B cell (primary cell): ENCODE measurements at regions of chr13 and their contacts with region 1.

Region 1: GRCh38 chr13:21670883-21671619 is at the start of gene FGF9:
- DNase-seq: peak; percentile 89
- ATAC-seq: peak; percentile 73
- H3K4me3 ChIP-seq: peak within 1 kb of the TSS; percentile 63 to 89 (median 75)
- H3K4me3 Mint-ChIP-seq: peak within 1 kb of the TSS; percentile 92
- H3K27ac ChIP-seq: no peak within 1 kb of the TSS
- H3K27ac Mint-ChIP-seq: peak within 1 kb of the TSS; percentile 79
- H3K4me1 ChIP-seq: peaks cover 48 to 60% of the 10 kb centered on the region in 2 donors
- H3K4me1 Mint-ChIP-seq: peaks cover 50% of the 10 kb centered on the region
- H3K27me3 ChIP-seq: peaks cover 0 to 66% (median 42%) of the 10 kb centered on the region in 4 experiments
- H3K27me3 Mint-ChIP-seq: peaks cover 49% of the 10 kb centered on the region
- CTCF ChIP-seq: no peak
- total RNA-seq, gene FGF9: 2.5 and 3.0 TPM in 2 replicates

Region 2: DNA sequence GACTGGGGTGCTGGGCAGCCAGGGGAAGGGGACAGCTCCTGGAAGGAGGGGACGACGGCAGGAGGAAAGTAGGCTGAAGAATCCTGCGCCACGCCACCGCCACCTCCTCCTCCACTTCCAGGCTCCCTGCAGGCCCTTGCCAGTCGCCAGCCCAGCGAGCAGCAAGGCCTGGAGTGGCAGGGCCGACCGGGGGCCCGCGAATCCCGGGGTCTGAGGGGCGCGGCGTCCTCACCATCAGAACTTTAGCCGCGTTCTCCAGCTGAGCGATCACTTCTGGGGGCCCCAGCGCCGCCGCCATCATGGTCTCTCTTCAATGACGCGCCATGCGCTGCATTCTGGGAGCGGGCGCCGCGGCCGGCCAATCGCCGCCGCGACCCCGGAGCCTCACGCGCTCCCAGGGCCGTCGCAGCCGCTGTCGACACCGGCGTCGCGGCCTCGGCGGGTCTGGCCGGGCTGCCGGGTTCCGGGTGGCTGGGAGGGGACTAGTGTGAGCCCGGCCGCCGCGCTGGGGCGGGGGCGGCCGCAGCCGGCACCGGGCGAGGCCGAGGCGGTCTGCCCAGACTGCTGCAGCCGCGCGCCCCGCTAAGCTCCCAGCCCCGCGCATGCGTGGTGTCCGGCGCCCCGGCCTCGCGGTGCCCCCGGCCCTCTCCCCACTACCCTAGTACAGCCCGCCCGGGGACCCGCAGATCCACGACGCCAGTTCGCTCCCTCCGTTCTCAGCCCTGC is 768.5 kb before region 1 on chr13 and contains the start of gene XPO4:
- CTCF ChIA-PET with region 1: no interaction called
- POLR2A ChIA-PET with region 1: no interaction called
- intact Hi-C with region 1: loop called (anchors 5 kb)
- DNase-seq: peak; percentile 89
- ATAC-seq: peak; percentile 91
- H3K4me3 ChIP-seq: peak within 1 kb of the TSS; percentile 62 to 98 (median 96)
- H3K4me3 Mint-ChIP-seq: peak within 1 kb of the TSS; percentile 94
- H3K27ac ChIP-seq: peak within 1 kb of the TSS; percentile 91 to 97
- H3K27ac Mint-ChIP-seq: peak within 1 kb of the TSS; percentile 94
- H3K4me1 ChIP-seq: peaks cover 10 to 11% of the 10 kb centered on the region in 2 donors
- H3K4me1 Mint-ChIP-seq: peaks cover 30% of the 10 kb centered on the region
- H3K27me3 ChIP-seq: no peaks in the 10 kb centered on the region
- H3K27me3 Mint-ChIP-seq: no peaks in the 10 kb centered on the region
- CTCF ChIP-seq: no peak
- total RNA-seq, gene XPO4: 25.9 and 30.6 TPM in 2 replicates

Region 3: GRCh38 chr13:21297914-21298831 is 372.9 kb before region 1 on chr13:
- CTCF ChIA-PET with region 1: no interaction called
- POLR2A ChIA-PET with region 1: no interaction called
- intact Hi-C with region 1: loop called (anchors 2 kb)
- DNase-seq: peak; percentile 93
- ATAC-seq: peak; percentile 96
- H3K4me3 ChIP-seq: peak overlapping the region; percentile 8 to 88 (median 75)
- H3K4me3 Mint-ChIP-seq: peak overlapping the region; percentile 89
- H3K27ac ChIP-seq: peak overlapping the region; percentile 7 to 77
- H3K27ac Mint-ChIP-seq: peak overlapping the region; percentile 89
- H3K4me1 ChIP-seq: peaks cover 15 to 18% of the 10 kb centered on the region in 2 donors
- H3K4me1 Mint-ChIP-seq: peaks cover 17% of the 10 kb centered on the region
- H3K27me3 ChIP-seq: no peaks in the 10 kb centered on the region
- H3K27me3 Mint-ChIP-seq: no peaks in the 10 kb centered on the region
- CTCF ChIP-seq: peak; percentile 93

Region 4: GRCh38 chr13:21465710-21466160 is 205.3 kb before region 1 on chr13:
- CTCF ChIA-PET with region 1: no interaction called
- POLR2A ChIA-PET with region 1: no interaction called
- intact Hi-C with region 1: no loop called
- DNase-seq: no peak
- ATAC-seq: no peak
- H3K4me3 ChIP-seq: no peak overlapping the region
- H3K4me3 Mint-ChIP-seq: no peak overlapping the region
- H3K27ac ChIP-seq: no peak overlapping the region
- H3K27ac Mint-ChIP-seq: no peak overlapping the region
- H3K4me1 ChIP-seq: no peaks in the 10 kb centered on the region
- H3K4me1 Mint-ChIP-seq: no peaks in the 10 kb centered on the region
- H3K27me3 ChIP-seq: no peaks in the 10 kb centered on the region
- H3K27me3 Mint-ChIP-seq: peaks cover 6% of the 10 kb centered on the region
- CTCF ChIP-seq: no peak

Region 5: GRCh38 chr13:21483748-21484147 is 187.3 kb before region 1 on chr13:
- CTCF ChIA-PET with region 1: no interaction called
- POLR2A ChIA-PET with region 1: no interaction called
- intact Hi-C with region 1: no loop called
- DNase-seq: no peak
- ATAC-seq: no peak
- H3K4me3 ChIP-seq: no peak overlapping the region
- H3K4me3 Mint-ChIP-seq: no peak overlapping the region
- H3K27ac ChIP-seq: no peak overlapping the region
- H3K27ac Mint-ChIP-seq: no peak overlapping the region
- H3K4me1 ChIP-seq: no peaks in the 10 kb centered on the region
- H3K4me1 Mint-ChIP-seq: peaks cover 5% of the 10 kb centered on the region
- H3K27me3 ChIP-seq: peaks cover 0 to 4% (median 2%) of the 10 kb centered on the region in 4 experiments
- H3K27me3 Mint-ChIP-seq: no peaks in the 10 kb centered on the region
- CTCF ChIP-seq: no peak

Region 6: DNA sequence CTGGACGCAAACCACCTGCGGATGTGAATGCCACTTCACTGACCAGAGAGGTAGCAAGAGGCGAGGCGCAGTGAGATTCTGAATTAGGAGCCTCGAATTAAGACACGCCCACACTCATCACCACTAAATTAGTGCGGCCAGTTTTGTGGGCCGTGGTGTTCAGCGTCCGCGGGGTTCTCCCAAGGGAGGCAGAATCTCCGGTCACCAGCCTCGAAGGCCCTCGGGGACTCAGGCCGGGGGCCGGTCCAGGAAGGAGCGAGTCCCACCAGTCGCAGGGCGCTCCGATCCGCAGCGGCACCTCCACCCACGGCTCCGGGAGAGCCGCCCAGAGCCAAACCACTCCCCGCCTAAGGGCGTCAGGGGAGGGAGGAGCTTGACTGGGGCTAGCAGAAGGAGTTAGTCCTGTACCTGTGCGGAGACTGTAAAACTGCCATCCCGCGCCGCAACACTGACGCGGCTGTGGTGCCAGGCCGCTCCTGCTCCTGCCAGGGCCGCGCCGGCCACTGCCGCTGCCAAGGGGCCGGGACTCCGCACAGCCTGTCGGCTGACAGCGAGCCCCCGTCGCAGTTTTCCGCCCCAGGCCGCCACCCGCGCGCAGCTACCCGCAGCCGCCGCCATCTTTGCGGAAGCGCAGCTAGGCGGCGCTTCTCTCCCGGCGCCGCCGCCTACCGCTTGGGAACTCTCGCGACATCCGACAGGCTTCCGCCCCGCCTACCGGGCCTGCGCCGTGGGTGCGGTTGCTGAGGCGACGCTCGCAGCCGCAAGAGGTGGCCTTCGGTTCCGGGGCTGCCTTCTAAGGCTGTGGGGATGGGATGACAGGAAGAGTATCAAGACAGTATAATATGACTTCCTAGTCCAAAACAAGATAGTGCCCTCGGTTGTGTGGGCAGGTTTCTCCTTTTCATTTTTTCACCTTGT is 67.3 kb before region 1 on chr13 and contains the start of gene MICU2:
- CTCF ChIA-PET with region 1: interaction called, 4 read pairs
- POLR2A ChIA-PET with region 1: interaction called, 16 read pairs
- intact Hi-C with region 1: loop called (anchors 1 kb)
- DNase-seq: peak; percentile 98
- ATAC-seq: peak; percentile 93
- H3K4me3 ChIP-seq: peak within 1 kb of the TSS; percentile 59 to 92 (median 75)
- H3K4me3 Mint-ChIP-seq: peak within 1 kb of the TSS; percentile 95
- H3K27ac ChIP-seq: peak within 1 kb of the TSS; percentile 80 to 98
- H3K27ac Mint-ChIP-seq: peak within 1 kb of the TSS; percentile 98
- H3K4me1 ChIP-seq: peaks cover 17 to 21% of the 10 kb centered on the region in 2 donors
- H3K4me1 Mint-ChIP-seq: peaks cover 35% of the 10 kb centered on the region
- H3K27me3 ChIP-seq: peaks cover 2 to 12% (median 3%) of the 10 kb centered on the region in 4 experiments
- H3K27me3 Mint-ChIP-seq: peaks cover 29% of the 10 kb centered on the region
- CTCF ChIP-seq: no peak
- total RNA-seq, gene MICU2: 52.2 and 52.5 TPM in 2 replicates

Region 7: DNA sequence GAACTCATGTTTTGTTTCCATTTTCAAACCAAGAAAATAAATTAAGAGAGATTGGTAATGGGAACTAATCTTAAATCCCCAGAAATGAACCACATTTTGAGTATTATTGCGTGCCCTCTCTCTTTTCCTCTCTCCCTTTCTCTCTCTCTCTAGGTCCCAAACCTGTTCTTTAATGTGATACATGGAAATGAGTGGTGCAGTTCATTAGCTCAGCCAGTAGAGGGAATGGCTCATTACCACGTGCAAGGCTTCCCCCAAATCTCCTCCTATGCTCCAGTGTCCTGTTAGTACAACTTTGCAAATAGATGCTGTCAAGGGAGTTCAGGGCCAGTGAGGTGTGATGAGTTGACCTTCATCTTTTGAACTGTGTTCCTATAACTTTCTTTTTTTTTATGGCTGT is 178.3 kb after region 1 on chr13:
- CTCF ChIA-PET with region 1: no interaction called
- POLR2A ChIA-PET with region 1: no interaction called
- intact Hi-C with region 1: loop called (anchors 10 kb)
- DNase-seq: peak; percentile 50
- ATAC-seq: peak; percentile 85
- H3K4me3 ChIP-seq: no peak overlapping the region
- H3K4me3 Mint-ChIP-seq: no peak overlapping the region
- H3K27ac ChIP-seq: no peak overlapping the region
- H3K27ac Mint-ChIP-seq: no peak overlapping the region
- H3K4me1 ChIP-seq: no peaks in the 10 kb centered on the region
- H3K4me1 Mint-ChIP-seq: peaks cover 2% of the 10 kb centered on the region
- H3K27me3 ChIP-seq: no peaks in the 10 kb centered on the region
- H3K27me3 Mint-ChIP-seq: no peaks in the 10 kb centered on the region
- CTCF ChIP-seq: peak; percentile 67

Region 8: DNA sequence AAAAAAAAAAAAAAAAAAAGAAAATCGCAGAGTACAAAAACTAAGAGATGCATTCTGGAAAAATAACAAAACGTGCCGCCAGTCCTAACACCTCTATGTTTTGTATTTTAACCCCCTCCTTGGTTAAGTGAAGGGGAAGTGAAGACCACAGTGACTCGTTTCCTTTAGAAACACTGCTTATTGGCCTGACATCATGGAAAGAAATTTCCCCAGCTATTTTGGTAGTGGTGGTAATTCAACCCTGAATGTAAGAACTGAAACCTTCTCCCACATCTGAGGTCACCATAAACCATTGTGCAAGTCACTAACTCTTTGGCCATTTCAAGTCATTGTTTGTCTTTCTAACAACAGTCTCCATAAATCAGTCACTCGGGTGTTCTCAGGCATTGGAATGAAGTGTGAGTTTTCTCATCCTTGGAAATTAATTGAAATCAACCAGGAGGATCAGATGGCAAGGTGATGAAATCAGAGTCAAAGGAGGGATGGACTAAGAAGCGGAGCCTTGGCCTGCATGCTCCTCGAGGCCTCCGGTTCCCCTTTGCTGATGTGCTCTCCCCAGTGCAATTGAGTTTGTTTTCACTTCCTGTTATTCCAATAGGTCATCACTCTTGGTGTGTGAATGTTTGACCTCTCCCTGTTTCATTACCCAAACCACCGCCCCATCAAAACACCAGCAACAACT is 443.7 kb after region 1 on chr13:
- CTCF ChIA-PET with region 1: interaction called, 3 read pairs
- POLR2A ChIA-PET with region 1: interaction called, 4 read pairs
- intact Hi-C with region 1: loop called (anchors 5 kb)
- DNase-seq: peak; percentile 93
- ATAC-seq: peak; percentile 84
- H3K4me3 ChIP-seq: peak overlapping the region in 1 of 5 experiments; percentile 4
- H3K4me3 Mint-ChIP-seq: peak overlapping the region; percentile 82
- H3K27ac ChIP-seq: peak overlapping the region; percentile 89 to 90
- H3K27ac Mint-ChIP-seq: peak overlapping the region; percentile 98
- H3K4me1 ChIP-seq: peaks cover 31 to 36% of the 10 kb centered on the region in 2 donors
- H3K4me1 Mint-ChIP-seq: peaks cover 45% of the 10 kb centered on the region
- H3K27me3 ChIP-seq: no peaks in the 10 kb centered on the region
- H3K27me3 Mint-ChIP-seq: no peaks in the 10 kb centered on the region
- CTCF ChIP-seq: no peak

Region 9: GRCh38 chr13:22198001-22198400 is 527.0 kb after region 1 on chr13:
- CTCF ChIA-PET with region 1: no interaction called
- POLR2A ChIA-PET with region 1: interaction called, 12 read pairs
- intact Hi-C with region 1: no loop called
- DNase-seq: no peak
- ATAC-seq: no peak
- H3K4me3 ChIP-seq: no peak overlapping the region
- H3K4me3 Mint-ChIP-seq: no peak overlapping the region
- H3K27ac ChIP-seq: no peak overlapping the region
- H3K27ac Mint-ChIP-seq: no peak overlapping the region
- H3K4me1 ChIP-seq: no peaks in the 10 kb centered on the region
- H3K4me1 Mint-ChIP-seq: peaks cover 9% of the 10 kb centered on the region
- H3K27me3 ChIP-seq: no peaks in the 10 kb centered on the region
- H3K27me3 Mint-ChIP-seq: no peaks in the 10 kb centered on the region
- CTCF ChIP-seq: no peak